HCT116 (cell line): ENCODE measurements at regions of chr12 and their contacts with region 1.

Region 1: GRCh38 chr12:39764944-39765560 is 145.4 kb upstream of the ABCD2 start:
- DNase-seq: peak; percentile 23
- ATAC-seq: no peak
- H3K4me3 ChIP-seq: no peak overlapping the region
- H3K27ac ChIP-seq: no peak overlapping the region
- H3K4me1 ChIP-seq: no peaks in the 10 kb centered on the region
- H3K27me3 ChIP-seq: no peaks in the 10 kb centered on the region
- CTCF ChIP-seq: peak; percentile 53 to 86 (median 79); a peak in 5 of 6 replicates
- POLR2A ChIP-seq: no peak
- RAD21 ChIP-seq: peak; percentile 77

Region 2: DNA sequence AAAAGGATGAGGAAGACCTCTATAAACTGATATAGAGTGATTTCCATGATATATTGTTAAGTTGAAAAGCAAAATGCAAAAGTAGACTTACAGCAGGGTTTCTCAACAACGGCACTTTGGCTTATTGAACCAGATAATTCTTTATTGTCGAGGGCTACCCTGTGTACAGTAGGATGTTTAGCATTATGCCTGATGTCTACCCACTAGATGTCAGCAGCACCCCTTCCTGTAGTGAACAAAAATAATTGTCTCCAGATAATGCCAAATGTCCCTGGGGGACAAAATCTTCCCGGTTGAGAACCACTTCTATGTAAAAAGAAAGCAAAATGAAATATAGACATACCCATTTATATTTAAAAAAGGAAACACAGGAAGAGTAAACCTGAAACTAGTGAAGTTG is 177.8 kb before region 1 on chr12:
- CTCF ChIA-PET with region 1: no interaction called
- POLR2A ChIA-PET with region 1: no interaction called
- RAD21 ChIA-PET with region 1: no interaction called
- intact Hi-C with region 1: loop called (anchors 2 kb)
- DNase-seq: peak; percentile 19
- ATAC-seq: peak; percentile 90
- H3K4me3 ChIP-seq: no peak overlapping the region
- H3K27ac ChIP-seq: no peak overlapping the region
- H3K4me1 ChIP-seq: no peaks in the 10 kb centered on the region
- H3K27me3 ChIP-seq: no peaks in the 10 kb centered on the region
- CTCF ChIP-seq: peak; percentile 41 to 57 (median 44); a peak in 4 of 6 replicates
- POLR2A ChIP-seq: no peak
- RAD21 ChIP-seq: peak; percentile 69

Region 3: GRCh38 chr12:39958377-39958776 is 193.3 kb after region 1 on chr12:
- CTCF ChIA-PET with region 1: no interaction called
- POLR2A ChIA-PET with region 1: no interaction called
- RAD21 ChIA-PET with region 1: no interaction called
- intact Hi-C with region 1: loop called (anchors 10 kb)
- DNase-seq: no peak
- ATAC-seq: no peak; the same call in 1 of the 2 replicates
- H3K4me3 ChIP-seq: no peak overlapping the region
- H3K27ac ChIP-seq: no peak overlapping the region
- H3K4me1 ChIP-seq: no peaks in the 10 kb centered on the region
- H3K27me3 ChIP-seq: no peaks in the 10 kb centered on the region
- CTCF ChIP-seq: peak; percentile 11 to 43 (median 42); a peak in 5 of 6 replicates
- POLR2A ChIP-seq: no peak
- RAD21 ChIP-seq: peak; percentile 27; the same call in 1 of the 2 replicates

Region 4: GRCh38 chr12:39990122-39991101 is 225.4 kb after region 1 on chr12:
- CTCF ChIA-PET with region 1: no interaction called
- POLR2A ChIA-PET with region 1: no interaction called
- RAD21 ChIA-PET with region 1: no interaction called
- intact Hi-C with region 1: loop called (anchors 1 kb)
- DNase-seq: peak; percentile 22
- ATAC-seq: peak; percentile 86
- H3K4me3 ChIP-seq: no peak overlapping the region
- H3K27ac ChIP-seq: no peak overlapping the region
- H3K4me1 ChIP-seq: no peaks in the 10 kb centered on the region
- H3K27me3 ChIP-seq: no peaks in the 10 kb centered on the region
- CTCF ChIP-seq: peak; percentile 38 to 95 (median 82); a peak in 5 of 6 replicates
- POLR2A ChIP-seq: no peak
- RAD21 ChIP-seq: peak; percentile 66

Region 5: GRCh38 chr12:40107098-40107802 is 342.2 kb after region 1 on chr12:
- CTCF ChIA-PET with region 1: interaction called, 3 read pairs
- POLR2A ChIA-PET with region 1: no interaction called
- RAD21 ChIA-PET with region 1: no interaction called
- intact Hi-C with region 1: loop called (anchors 1 kb)
- DNase-seq: peak; percentile 60
- ATAC-seq: peak; percentile 44
- H3K4me3 ChIP-seq: peak overlapping the region; percentile 10 to 31; a peak in 3 of 4 replicates
- H3K27ac ChIP-seq: no peak overlapping the region
- H3K4me1 ChIP-seq: peaks cover 7 to 25% of the 10 kb centered on the region in 2 experiments; a peak in 3 of 4 replicates
- H3K27me3 ChIP-seq: no peaks in the 10 kb centered on the region
- CTCF ChIP-seq: peak; percentile 84 to 90 (median 89); a peak in 5 of 6 replicates
- POLR2A ChIP-seq: no peak
- RAD21 ChIP-seq: peak; percentile 74

Region 6: DNA sequence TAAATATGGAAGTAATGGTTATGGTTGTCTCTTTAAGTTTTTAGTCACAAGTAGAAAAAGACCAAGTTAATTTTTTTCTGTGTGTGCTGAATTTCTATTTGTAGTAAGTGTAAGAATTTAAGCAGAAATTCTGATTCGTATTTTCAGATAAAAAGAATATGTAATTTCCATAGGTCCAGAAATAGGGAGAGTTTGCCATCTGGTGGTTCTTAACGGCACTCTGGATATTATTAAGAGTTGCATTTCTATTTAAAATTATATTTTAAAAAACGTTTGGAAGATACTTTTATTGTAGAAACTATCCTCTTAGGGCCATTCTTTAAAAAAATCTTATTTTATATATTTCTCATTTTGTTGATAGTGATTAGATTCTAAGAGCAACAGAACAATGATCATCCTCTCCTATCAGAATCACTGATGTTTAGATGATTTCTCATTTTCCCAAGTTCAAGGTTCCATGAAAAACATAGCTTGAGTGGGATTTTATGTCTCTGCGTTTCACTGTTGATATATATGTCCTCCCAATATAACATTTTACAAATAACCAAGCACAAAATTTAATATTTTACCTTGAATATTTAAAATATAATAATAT is 548.0 kb after region 1 on chr12:
- CTCF ChIA-PET with region 1: interaction called, 3 read pairs
- POLR2A ChIA-PET with region 1: no interaction called
- RAD21 ChIA-PET with region 1: no interaction called
- intact Hi-C with region 1: loop called (anchors 1 kb)
- DNase-seq: no peak
- ATAC-seq: no peak
- H3K4me3 ChIP-seq: no peak overlapping the region
- H3K27ac ChIP-seq: no peak overlapping the region
- H3K4me1 ChIP-seq: no peaks in the 10 kb centered on the region
- H3K27me3 ChIP-seq: no peaks in the 10 kb centered on the region
- CTCF ChIP-seq: peak; percentile 34 to 64 (median 50); a peak in 5 of 6 replicates
- POLR2A ChIP-seq: no peak
- RAD21 ChIP-seq: peak; percentile 64